ENCODE measurements at regions of chr3 and their contacts with region 1.

Region 1: GRCh38 chr3:154275965-154276364 is 48.3 kb downstream of the DHX36 start:
- DNase-seq: no peak
- ATAC-seq: no peak
- H3K4me3 ChIP-seq: no peak overlapping the region
- H3K4me3 Mint-ChIP-seq: no peak overlapping the region
- H3K27ac ChIP-seq: no peak overlapping the region
- H3K27ac Mint-ChIP-seq: no peak overlapping the region
- H3K4me1 ChIP-seq: no peaks in the 10 kb centered on the region
- H3K4me1 Mint-ChIP-seq: peaks cover 0 to 6% (median 4%) of the 10 kb centered on the region in 7 donors
- H3K27me3 ChIP-seq: no peaks in the 10 kb centered on the region
- H3K27me3 Mint-ChIP-seq: no peaks in the 10 kb centered on the region

Region 2: GRCh38 chr3:154095832-154096421 is 180.0 kb before region 1 on chr3:
- CTCF ChIA-PET with region 1: no interaction called
- POLR2A ChIA-PET with region 1: no interaction called
- intact Hi-C with region 1: no loop called
- DNase-seq: no peak
- ATAC-seq: no peak
- H3K4me3 ChIP-seq: no peak overlapping the region
- H3K4me3 Mint-ChIP-seq: no peak overlapping the region
- H3K27ac ChIP-seq: no peak overlapping the region
- H3K27ac Mint-ChIP-seq: no peak overlapping the region
- H3K4me1 ChIP-seq: no peaks in the 10 kb centered on the region
- H3K4me1 Mint-ChIP-seq: no peaks in the 10 kb centered on the region
- H3K27me3 ChIP-seq: no peaks in the 10 kb centered on the region
- H3K27me3 Mint-ChIP-seq: peaks cover 0 to 12% (median 1%) of the 10 kb centered on the region in 5 donors

Region 3: DNA sequence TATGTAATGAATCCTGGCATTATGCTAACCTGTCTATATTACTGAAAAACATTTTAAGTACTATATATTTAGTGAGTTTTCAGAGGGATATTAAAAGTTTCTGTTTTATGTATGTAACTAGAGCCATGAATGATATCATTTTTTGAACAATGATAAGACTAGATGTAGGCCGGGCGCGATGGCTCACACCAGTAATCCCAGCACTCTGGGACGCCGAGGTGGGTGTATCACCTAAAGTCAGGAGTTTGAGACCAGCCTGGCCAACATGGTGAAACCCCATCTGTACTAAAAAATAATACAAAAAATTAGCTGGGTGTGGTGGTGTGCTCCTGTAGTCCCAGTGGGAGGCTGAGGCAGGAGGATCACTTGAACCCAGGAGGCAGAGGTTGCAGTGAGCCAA is 14.2 kb after region 1 on chr3:
- CTCF ChIA-PET with region 1: no interaction called
- POLR2A ChIA-PET with region 1: no interaction called
- intact Hi-C with region 1: loop called in 1 of 2 experiments (anchors 2 kb)
- DNase-seq: no peak
- ATAC-seq: no peak
- H3K4me3 ChIP-seq: no peak overlapping the region
- H3K4me3 Mint-ChIP-seq: no peak overlapping the region
- H3K27ac ChIP-seq: no peak overlapping the region
- H3K27ac Mint-ChIP-seq: peak overlapping the region in 1 of 9 donors; percentile 49
- H3K4me1 ChIP-seq: no peaks in the 10 kb centered on the region
- H3K4me1 Mint-ChIP-seq: peaks cover 0 to 11% (median 5%) of the 10 kb centered on the region in 7 donors
- H3K27me3 ChIP-seq: no peaks in the 10 kb centered on the region
- H3K27me3 Mint-ChIP-seq: no peaks in the 10 kb centered on the region

Region 4: GRCh38 chr3:154316974-154317767 is 41.2 kb after region 1 on chr3:
- CTCF ChIA-PET with region 1: no interaction called
- POLR2A ChIA-PET with region 1: no interaction called
- intact Hi-C with region 1: loop called in 1 of 2 experiments (anchors 5 kb)
- DNase-seq: no peak
- ATAC-seq: no peak
- H3K4me3 ChIP-seq: no peak overlapping the region
- H3K4me3 Mint-ChIP-seq: peak overlapping the region in 6 of 10 donors; percentile 14 to 62 (median 34)
- H3K27ac ChIP-seq: peak overlapping the region; percentile 32
- H3K27ac Mint-ChIP-seq: peak overlapping the region in 8 of 9 donors; percentile 5 to 65 (median 38)
- H3K4me1 ChIP-seq: peaks cover 37 to 47% of the 10 kb centered on the region in 2 donors
- H3K4me1 Mint-ChIP-seq: peaks cover 7 to 37% (median 27%) of the 10 kb centered on the region in 7 donors
- H3K27me3 ChIP-seq: no peaks in the 10 kb centered on the region
- H3K27me3 Mint-ChIP-seq: no peaks in the 10 kb centered on the region

Measured in naive thymus-derived CD4-positive, alpha-beta T cell (primary cell).